ENCODE measurements at regions of chr1 and their contacts with region 1.

Region 1: DNA sequence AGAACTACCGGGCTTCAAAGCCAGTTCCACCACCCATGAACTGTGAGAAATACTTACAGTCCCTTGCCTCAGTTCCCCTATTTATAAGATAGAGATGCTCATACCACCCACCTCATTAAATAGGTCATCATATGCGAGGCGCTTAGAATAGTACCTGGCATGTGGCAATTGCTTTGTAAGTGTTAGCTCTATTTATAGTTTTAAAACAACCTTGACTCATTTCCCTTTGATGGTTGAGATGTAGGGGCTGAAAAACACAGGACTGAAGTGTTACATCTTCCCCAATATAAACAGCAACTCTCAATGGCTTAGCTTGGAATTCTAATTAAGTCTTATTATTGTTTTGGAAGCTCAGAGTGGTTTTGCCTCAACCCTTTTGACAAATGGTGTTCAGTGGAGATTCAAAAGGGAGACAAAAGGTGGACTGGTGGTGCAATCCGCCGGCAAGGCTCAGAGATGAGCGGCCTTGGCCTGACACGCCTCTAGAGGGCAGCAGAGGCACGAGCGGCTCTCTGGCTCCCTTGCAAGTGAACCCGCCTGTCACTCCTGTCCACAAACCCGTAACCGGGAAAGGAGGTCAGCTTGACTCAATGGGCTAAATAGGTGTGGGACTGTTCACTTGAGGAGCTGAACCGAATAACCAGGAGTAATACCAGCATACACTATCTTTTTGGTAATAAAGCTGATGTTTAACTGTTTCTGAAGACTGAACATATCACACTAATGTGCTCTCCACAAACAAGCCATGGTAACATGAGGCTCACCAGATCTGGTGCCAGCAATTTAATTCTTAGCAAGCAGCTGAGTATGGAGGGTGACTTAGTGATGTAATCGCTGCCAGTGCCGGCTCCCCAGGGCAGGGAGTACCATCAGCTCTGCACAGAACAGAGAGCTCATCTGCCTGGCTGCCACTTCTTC is 19.5 kb upstream of the SMYD2 start:
- DNase-seq: peak; percentile 70
- CTCF ChIP-seq: peak; percentile 89

Region 2: GRCh38 chr1:214213136-214213535 is 48.3 kb before region 1 on chr1:
- CTCF ChIA-PET with region 1: interaction called, 13 read pairs
- POLR2A ChIA-PET with region 1: no interaction called
- DNase-seq: no peak
- CTCF ChIP-seq: no peak

Region 3: GRCh38 chr1:214247501-214248041 is 13.9 kb before region 1 on chr1:
- CTCF ChIA-PET with region 1: interaction called, 43 read pairs
- POLR2A ChIA-PET with region 1: no interaction called
- DNase-seq: no peak
- CTCF ChIP-seq: no peak

Region 4: GRCh38 chr1:214296860-214297745 is 35.6 kb after region 1 on chr1:
- CTCF ChIA-PET with region 1: interaction called, 54 read pairs
- POLR2A ChIA-PET with region 1: no interaction called
- DNase-seq: no peak
- CTCF ChIP-seq: no peak

Region 5: GRCh38 chr1:214310777-214311690 is 49.6 kb after region 1 on chr1:
- CTCF ChIA-PET with region 1: interaction called, 79 read pairs
- POLR2A ChIA-PET with region 1: no interaction called
- DNase-seq: no peak
- CTCF ChIP-seq: no peak

Region 6: GRCh38 chr1:214404154-214404553 is 142.7 kb after region 1 on chr1:
- CTCF ChIA-PET with region 1: no interaction called
- POLR2A ChIA-PET with region 1: no interaction called
- DNase-seq: no peak
- CTCF ChIP-seq: no peak

Measured in GM10248 (cell line).